Calu3 (cell line): ENCODE measurements at regions of chr14 and their contacts with region 1.

Region 1: GRCh38 chr14:51780006-51780692 is 80.3 kb upstream of the GNG2 start:
- DNase-seq: peak; percentile 67
- H3K4me3 Mint-ChIP-seq: peak overlapping the region; percentile 35
- H3K27ac Mint-ChIP-seq: no peak overlapping the region
- H3K4me1 Mint-ChIP-seq: peaks cover 19% of the 10 kb centered on the region
- H3K27me3 Mint-ChIP-seq: peaks cover 10% of the 10 kb centered on the region
- CTCF ChIP-seq: peak; percentile 75

Region 2: GRCh38 chr14:50954811-50955372 is 825.3 kb before region 1 on chr14:
- CTCF ChIA-PET with region 1: no interaction called
- intact Hi-C with region 1: loop called (anchors 10 kb)
- DNase-seq: no peak
- H3K4me3 Mint-ChIP-seq: no peak overlapping the region
- H3K27ac Mint-ChIP-seq: peak overlapping the region; percentile 81
- H3K4me1 Mint-ChIP-seq: peaks cover 19% of the 10 kb centered on the region
- H3K27me3 Mint-ChIP-seq: no peaks in the 10 kb centered on the region
- CTCF ChIP-seq: peak; percentile 45

Region 3: GRCh38 chr14:51369814-51370213 is 410.3 kb before region 1 on chr14:
- CTCF ChIA-PET with region 1: no interaction called
- intact Hi-C with region 1: loop called (anchors 2 kb)
- DNase-seq: peak; percentile 43
- H3K4me3 Mint-ChIP-seq: no peak overlapping the region
- H3K27ac Mint-ChIP-seq: no peak overlapping the region
- H3K4me1 Mint-ChIP-seq: peaks cover 8% of the 10 kb centered on the region
- H3K27me3 Mint-ChIP-seq: no peaks in the 10 kb centered on the region
- CTCF ChIP-seq: peak; percentile 35

Region 4: DNA sequence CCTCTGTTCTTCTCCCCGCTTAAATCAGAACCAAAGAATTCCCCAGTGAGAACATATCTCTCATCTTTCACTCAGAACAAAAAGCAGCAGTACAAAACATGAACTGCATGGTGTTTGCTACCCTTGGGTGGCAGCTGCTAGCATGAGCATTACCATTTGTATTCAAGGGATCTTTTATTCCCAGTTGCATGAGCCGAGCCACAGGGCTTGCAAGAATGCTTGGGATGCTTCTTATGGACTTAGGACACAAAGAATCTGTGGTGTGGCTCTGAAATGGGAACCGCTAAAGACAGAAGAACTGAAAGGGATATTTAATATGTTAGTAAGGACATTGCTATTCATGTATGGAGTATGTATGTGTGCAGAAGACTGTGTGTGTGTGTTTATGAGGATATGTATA is 349.5 kb before region 1 on chr14:
- CTCF ChIA-PET with region 1: no interaction called
- intact Hi-C with region 1: no loop called
- DNase-seq: no peak
- H3K4me3 Mint-ChIP-seq: peak overlapping the region; percentile 29
- H3K27ac Mint-ChIP-seq: peak overlapping the region; percentile 75
- H3K4me1 Mint-ChIP-seq: peaks cover 22% of the 10 kb centered on the region
- H3K27me3 Mint-ChIP-seq: no peaks in the 10 kb centered on the region
- CTCF ChIP-seq: no peak

Region 5: GRCh38 chr14:51651388-51652167 is 128.6 kb before region 1 on chr14 and contains the start of gene FRMD6:
- CTCF ChIA-PET with region 1: interaction called, 17 read pairs
- intact Hi-C with region 1: loop called (anchors 1 kb)
- DNase-seq: peak; percentile 84
- H3K4me3 Mint-ChIP-seq: peak within 1 kb of the TSS; percentile 80
- H3K27ac Mint-ChIP-seq: peak within 1 kb of the TSS; percentile 58
- H3K4me1 Mint-ChIP-seq: peaks cover 17% of the 10 kb centered on the region
- H3K27me3 Mint-ChIP-seq: no peaks in the 10 kb centered on the region
- CTCF ChIP-seq: peak; percentile 55
- total RNA-seq, gene FRMD6: 17.0 and 33.3 TPM in 2 replicates

Region 6: GRCh38 chr14:51979088-51979709 is 199.1 kb after region 1 on chr14:
- CTCF ChIA-PET with region 1: interaction called, 3 read pairs
- intact Hi-C with region 1: loop called (anchors 2 kb)
- DNase-seq: peak; percentile 80
- H3K4me3 Mint-ChIP-seq: no peak overlapping the region
- H3K27ac Mint-ChIP-seq: no peak overlapping the region
- H3K4me1 Mint-ChIP-seq: no peaks in the 10 kb centered on the region
- H3K27me3 Mint-ChIP-seq: peaks cover 58% of the 10 kb centered on the region
- CTCF ChIP-seq: peak; percentile 82